Activated T-helper 2 cell treated with anti-CD3 and anti-CD28 coated beads, Interferon-gamma antibody, Interleukin-2, Interleukin-4, amounts not matched to agents 10 μg/mL and 5 μg/mL and 100 μg/mL, durations not matched to agents 14 hours and 24 hours and 36 hours (primary cell): ENCODE measurements at regions of chr3 and their contacts with region 1.

Region 1: DNA sequence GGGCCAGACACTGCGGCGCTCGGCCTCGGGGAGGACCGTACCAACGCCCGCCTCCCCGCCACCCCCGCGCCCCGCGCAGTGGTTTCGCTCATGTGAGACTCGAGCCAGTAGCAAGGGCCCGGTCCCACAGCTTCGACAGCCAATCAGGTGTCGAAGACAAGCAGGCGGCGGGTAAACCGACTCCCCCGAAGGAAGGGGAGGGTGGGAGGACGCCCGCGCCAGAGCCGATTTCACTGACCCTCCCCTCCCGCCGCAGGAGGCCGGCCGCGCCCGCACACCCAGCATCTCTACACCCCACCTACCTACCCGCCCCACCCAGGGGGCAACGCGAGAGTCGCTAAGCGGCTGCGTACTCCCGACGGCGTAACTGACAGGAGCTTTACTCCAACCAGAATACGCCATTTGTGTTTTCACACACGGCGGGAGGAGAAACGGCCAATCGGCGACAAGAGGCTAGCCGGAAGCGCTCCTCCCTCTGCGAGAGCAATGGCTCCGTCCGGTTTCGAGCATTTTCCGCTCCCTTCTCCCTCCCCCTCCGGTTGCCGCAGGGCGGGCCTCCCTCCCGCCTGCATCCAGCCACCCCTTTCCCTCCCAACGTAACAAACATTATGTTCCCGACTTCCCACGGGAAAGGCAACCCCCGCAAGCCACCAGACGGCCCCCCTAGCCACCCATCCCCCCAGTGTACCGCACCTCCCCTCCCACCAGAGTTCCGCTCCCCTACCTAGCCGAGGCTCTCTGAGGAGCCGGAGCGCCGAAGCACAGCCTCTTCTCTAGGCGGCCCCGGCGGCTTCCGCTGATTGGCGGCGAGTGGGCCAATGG is 504 bp upstream of the SETD5 start:
- DNase-seq: peak; percentile 99
- H3K4me3 Mint-ChIP-seq: peak overlapping the region; percentile 96
- H3K27ac Mint-ChIP-seq: peak overlapping the region; percentile 99
- H3K4me1 Mint-ChIP-seq: peaks cover 56% of the 10 kb centered on the region
- H3K27me3 Mint-ChIP-seq: no peaks in the 10 kb centered on the region

Region 2: GRCh38 chr3:8963137-8963869 is 433.6 kb before region 1 on chr3 and contains the start of gene RAD18:
- intact Hi-C with region 1: loop called (anchors 1 kb)
- DNase-seq: peak; percentile 92
- H3K4me3 Mint-ChIP-seq: peak within 1 kb of the TSS; percentile 82
- H3K27ac Mint-ChIP-seq: peak within 1 kb of the TSS; percentile 98
- H3K4me1 Mint-ChIP-seq: peaks cover 37% of the 10 kb centered on the region
- H3K27me3 Mint-ChIP-seq: peaks cover 2% of the 10 kb centered on the region
- total RNA-seq, gene RAD18: 46.1 and 46.5 TPM in 2 replicates

Region 3: DNA sequence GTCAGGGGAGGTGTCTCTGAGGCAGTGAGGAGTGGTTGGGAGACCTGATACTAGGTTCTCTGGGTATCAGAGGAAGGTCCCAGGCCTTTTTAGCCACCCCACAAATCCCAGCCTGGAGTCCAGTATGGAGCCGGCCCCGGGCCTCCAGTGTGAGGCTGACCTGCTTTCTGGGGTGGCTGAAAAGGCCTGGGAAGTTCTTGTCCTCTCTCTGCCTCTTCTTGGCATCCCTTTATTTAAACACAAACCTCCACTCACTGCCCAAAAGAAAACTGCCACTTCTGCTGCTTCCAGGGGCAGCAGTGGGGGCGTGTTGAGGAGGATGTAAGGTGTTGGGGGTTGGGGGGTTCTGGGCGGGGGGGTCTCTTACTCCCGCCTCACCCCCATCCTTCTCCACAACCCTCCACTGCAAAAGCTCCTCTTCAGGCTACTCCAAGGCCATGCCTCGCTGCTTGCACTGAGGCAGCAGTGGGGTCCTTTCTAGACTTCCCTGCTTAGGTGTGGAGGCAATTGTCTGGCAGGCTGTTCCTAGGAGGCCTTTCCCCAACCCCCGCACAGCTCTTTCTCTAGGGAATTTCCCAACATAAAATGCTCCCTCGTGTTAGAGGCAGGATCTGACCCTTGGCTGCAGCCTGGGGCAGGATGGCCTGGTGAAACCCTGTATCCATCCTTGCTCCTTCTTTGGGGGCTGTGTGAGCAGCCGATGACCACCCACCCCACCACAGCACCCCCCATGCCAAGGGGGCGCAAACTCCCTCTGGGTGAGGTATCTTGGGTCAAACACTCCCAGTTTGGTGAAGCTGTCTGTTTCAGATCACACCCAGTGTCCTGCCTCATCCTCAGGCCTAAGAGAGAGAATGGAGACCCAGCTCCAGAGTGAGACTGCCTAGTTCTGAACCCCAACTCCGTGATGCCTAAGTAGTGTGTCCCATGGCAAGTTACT is 421.6 kb before region 1 on chr3:
- intact Hi-C with region 1: no loop called
- DNase-seq: no peak
- H3K4me3 Mint-ChIP-seq: no peak overlapping the region
- H3K27ac Mint-ChIP-seq: no peak overlapping the region
- H3K4me1 Mint-ChIP-seq: peaks cover 5% of the 10 kb centered on the region
- H3K27me3 Mint-ChIP-seq: peaks cover 8% of the 10 kb centered on the region

Region 4: GRCh38 chr3:9422712-9423424 is 26.0 kb after region 1 on chr3:
- intact Hi-C with region 1: loop called (anchors 2 kb)
- DNase-seq: no peak
- H3K4me3 Mint-ChIP-seq: no peak overlapping the region
- H3K27ac Mint-ChIP-seq: peak overlapping the region; percentile 72
- H3K4me1 Mint-ChIP-seq: peaks cover 35% of the 10 kb centered on the region
- H3K27me3 Mint-ChIP-seq: no peaks in the 10 kb centered on the region

Region 5: DNA sequence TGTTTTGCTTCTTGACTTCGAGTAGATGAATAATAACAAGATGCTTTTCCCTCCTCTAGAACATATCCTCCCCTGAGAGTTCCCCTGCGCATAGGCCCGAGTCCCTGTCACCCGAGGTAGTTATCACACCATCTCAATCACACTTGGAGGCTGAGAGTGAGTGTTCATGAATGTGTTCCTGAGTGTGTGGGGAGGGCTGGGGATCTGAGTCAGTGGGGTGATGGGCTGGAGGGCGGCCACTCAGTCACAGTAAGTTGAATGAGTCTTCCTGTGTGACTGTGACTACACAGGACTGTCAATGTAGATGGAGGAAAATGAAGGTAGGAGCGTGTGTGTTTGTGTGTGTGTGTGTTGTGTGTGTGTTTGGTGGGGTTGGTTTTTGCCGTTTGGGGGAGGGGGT is 71.5 kb after region 1 on chr3:
- intact Hi-C with region 1: loop called (anchors 5 kb)
- DNase-seq: no peak
- H3K4me3 Mint-ChIP-seq: no peak overlapping the region
- H3K27ac Mint-ChIP-seq: peak overlapping the region; percentile 56
- H3K4me1 Mint-ChIP-seq: peaks cover 31% of the 10 kb centered on the region
- H3K27me3 Mint-ChIP-seq: no peaks in the 10 kb centered on the region

Region 6: GRCh38 chr3:9731206-9732079 is 334.5 kb after region 1 on chr3 and contains the start of gene BRPF1:
- intact Hi-C with region 1: loop called (anchors 1 kb)
- DNase-seq: peak; percentile 96
- H3K4me3 Mint-ChIP-seq: peak within 1 kb of the TSS; percentile 96
- H3K27ac Mint-ChIP-seq: peak within 1 kb of the TSS; percentile 90
- H3K4me1 Mint-ChIP-seq: peaks cover 57% of the 10 kb centered on the region
- H3K27me3 Mint-ChIP-seq: no peaks in the 10 kb centered on the region
- total RNA-seq, gene BRPF1: 34.2 and 35.8 TPM in 2 replicates

Region 7: GRCh38 chr3:9792405-9793160 is 395.7 kb after region 1 on chr3 and contains the starts of genes ARPC4 and TADA3:
- intact Hi-C with region 1: loop called (anchors 2 kb)
- DNase-seq: peak; percentile 90
- H3K4me3 Mint-ChIP-seq: peak within 1 kb of the TSS; percentile 99
- H3K27ac Mint-ChIP-seq: peak within 1 kb of the TSS; percentile 98
- H3K4me1 Mint-ChIP-seq: peaks cover 55% of the 10 kb centered on the region
- H3K27me3 Mint-ChIP-seq: no peaks in the 10 kb centered on the region
- total RNA-seq, gene ARPC4: 253 and 268 TPM in 2 replicates
- total RNA-seq, gene TADA3: 86.6 and 89.2 TPM in 2 replicates

Region 8: DNA sequence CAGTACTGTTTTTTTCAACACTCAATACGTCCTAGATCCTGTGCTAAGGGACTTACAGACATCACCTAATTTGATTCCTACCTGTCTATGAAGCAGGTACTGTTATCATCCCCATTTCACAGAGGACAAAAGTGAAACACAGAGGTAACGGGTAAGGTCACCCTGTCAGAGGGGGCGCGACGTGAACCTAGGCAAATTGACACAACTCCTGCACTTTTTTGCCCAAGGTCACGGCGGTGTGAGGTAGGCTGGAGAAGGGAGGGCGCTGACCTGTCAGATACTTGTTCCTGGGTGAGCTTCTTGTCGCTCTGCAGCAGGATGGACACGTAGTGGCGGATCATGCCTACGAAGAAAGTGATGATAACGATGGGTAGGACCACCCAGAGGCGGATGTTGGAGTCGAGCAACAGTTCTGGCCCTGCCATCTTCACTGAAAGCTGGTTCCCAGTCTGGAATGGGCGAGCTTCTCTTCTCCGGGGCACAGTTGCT is 589.4 kb after region 1 on chr3:
- intact Hi-C with region 1: loop called (anchors 2 kb)
- DNase-seq: no peak
- H3K4me3 Mint-ChIP-seq: peak overlapping the region; percentile 96
- H3K27ac Mint-ChIP-seq: peak overlapping the region; percentile 99
- H3K4me1 Mint-ChIP-seq: peaks cover 18% of the 10 kb centered on the region
- H3K27me3 Mint-ChIP-seq: no peaks in the 10 kb centered on the region